Activated CD4-positive, alpha-beta memory T cell treated with anti-CD3 and anti-CD28 coated beads, Interleukin-2, amount 10 ng/mL, durations not matched to agents 7 days and 5 days (primary cell): ENCODE measurements at regions of chr10 and their contacts with region 1.

Region 1: DNA sequence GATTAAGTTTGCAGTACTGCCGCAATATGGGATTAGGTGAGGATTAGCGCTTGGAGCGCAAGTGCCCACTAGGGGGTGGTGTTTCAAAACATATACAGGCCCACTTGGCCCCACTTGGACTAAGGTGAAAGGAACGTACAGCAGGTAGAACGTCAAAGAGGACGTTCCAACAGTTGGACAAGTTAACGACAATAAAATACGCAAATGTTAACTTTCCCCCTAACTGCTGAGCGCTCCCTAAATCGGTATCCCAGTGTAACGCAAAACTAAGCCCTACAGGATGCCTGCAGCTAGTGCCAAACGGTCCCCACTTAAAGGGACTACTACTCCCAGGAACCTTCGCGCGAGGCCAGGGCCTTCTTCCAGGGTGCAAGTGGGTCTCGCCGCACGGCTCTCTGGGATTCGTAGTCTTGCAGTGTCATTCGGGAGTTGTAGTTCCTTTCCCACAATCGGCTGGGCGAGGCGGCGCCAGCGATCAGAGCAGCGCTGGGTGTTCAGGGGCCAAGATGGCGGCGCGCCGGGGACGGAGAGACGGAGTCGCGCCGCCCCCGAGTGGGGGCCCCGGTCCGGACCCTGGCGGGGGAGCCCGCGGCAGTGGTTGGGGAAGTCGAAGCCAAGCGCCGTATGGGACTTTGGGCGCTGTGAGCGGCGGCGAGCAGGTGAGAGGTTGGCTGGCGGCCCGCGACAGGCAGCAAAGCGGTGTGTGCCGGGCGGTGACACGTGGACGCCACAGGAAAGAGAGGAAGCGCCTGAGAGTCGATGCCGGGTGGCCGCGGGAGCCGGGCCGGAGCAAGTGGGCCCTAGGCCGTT is at the start of gene PPRC1:
- DNase-seq: peak; percentile 99
- H3K4me3 Mint-ChIP-seq: peak within 1 kb of the TSS; percentile 98
- H3K27ac Mint-ChIP-seq: peak within 1 kb of the TSS; percentile 96
- H3K4me1 Mint-ChIP-seq: peaks cover 46% of the 10 kb centered on the region
- H3K27me3 Mint-ChIP-seq: no peaks in the 10 kb centered on the region
- total RNA-seq, gene PPRC1: 32.5 to 35.8 TPM

Region 2: DNA sequence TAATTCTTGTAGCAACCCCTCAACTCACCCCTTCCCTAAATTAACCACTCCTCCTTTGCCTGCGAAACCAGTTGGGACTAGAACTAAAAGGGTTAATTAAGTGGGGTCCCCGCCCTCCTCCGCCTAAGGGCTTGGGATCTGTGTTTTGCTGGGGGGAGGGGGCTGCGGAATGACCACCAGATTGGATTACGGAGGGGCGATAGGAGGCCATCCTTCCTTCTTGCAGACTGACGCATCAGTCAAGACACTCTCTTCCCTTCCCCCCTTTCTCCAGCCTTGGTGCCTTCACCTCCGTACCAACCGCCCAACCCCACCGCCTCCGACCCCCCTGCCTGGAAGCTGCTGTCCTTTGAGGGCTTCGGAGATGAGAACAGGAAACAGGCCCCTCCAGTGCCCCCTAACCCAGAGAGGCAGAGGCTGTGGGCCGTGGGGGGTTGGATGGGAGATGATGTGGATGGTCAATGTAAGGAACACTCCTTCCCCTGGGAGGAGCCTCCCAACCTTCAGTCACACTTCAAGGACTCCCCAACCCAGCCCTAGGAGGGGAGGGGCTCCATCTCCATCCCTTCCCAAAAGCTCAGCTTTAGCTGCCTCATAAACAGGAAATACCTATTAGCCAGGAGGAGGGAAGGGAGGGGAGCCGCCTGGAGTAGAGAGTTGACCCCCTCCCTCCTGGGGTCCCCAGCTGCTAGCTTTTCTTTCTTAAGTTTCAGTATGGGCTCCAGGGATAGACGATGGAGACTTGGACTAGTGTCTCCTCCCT is 11.6 kb before region 1 on chr10:
- CTCF ChIA-PET with region 1: interaction called, 17 read pairs
- POLR2A ChIA-PET with region 1: interaction called, 18 read pairs
- DNase-seq: peak; percentile 20
- H3K4me3 Mint-ChIP-seq: peak overlapping the region; percentile 91
- H3K27ac Mint-ChIP-seq: peak overlapping the region; percentile 87
- H3K4me1 Mint-ChIP-seq: peaks cover 42% of the 10 kb centered on the region
- H3K27me3 Mint-ChIP-seq: no peaks in the 10 kb centered on the region

Region 3: DNA sequence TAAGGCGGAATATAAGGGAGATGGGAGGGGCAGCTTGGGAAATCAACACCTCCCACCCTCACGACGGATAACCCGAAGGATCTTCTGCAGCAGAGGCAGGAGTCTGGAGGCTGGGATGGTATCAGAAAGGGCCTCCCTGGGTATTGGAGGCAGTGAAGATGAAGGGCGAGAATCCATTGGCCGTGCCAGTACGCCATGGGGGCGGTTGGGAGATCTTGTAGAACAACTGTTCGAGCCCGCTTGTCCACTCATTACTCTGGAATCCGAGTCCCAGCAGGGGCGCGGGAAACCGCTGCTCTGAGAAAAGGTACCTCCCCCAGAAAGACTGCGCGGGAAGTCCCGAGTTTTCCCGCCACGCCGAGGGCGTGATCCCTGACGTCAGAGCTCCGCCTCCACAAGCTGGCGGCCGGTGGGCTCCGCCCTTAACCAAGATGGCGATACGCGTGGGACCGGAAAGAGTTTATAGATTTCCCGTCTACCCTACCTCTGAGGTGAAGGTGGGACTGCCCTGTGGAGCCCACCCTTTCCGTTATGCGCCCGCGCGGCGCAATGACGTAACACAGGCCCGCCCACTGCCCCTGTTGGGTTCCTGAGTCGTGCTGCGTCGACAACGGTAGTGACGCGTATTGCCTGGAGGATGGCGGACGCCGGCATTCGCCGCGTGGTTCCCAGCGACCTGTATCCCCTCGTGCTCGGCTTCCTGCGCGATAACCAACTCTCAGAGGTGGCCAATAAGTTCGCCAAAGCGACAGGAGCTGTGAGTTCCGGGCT is 19.2 kb after region 1 on chr10 and contains the start of gene NOLC1:
- CTCF ChIA-PET with region 1: interaction called, 18 read pairs
- POLR2A ChIA-PET with region 1: interaction called, 13 read pairs
- DNase-seq: peak; percentile 100
- H3K4me3 Mint-ChIP-seq: peak within 1 kb of the TSS; percentile 90
- H3K27ac Mint-ChIP-seq: peak within 1 kb of the TSS; percentile 87
- H3K4me1 Mint-ChIP-seq: peaks cover 55% of the 10 kb centered on the region
- H3K27me3 Mint-ChIP-seq: no peaks in the 10 kb centered on the region
- total RNA-seq, gene NOLC1: 57.0 to 64.3 TPM